Activated CD8-positive, alpha-beta T cell treated with anti-CD3 and anti-CD28 coated beads for 36 hours (primary cell): ENCODE measurements at regions of chr10 and their contacts with region 1.

Region 1: DNA sequence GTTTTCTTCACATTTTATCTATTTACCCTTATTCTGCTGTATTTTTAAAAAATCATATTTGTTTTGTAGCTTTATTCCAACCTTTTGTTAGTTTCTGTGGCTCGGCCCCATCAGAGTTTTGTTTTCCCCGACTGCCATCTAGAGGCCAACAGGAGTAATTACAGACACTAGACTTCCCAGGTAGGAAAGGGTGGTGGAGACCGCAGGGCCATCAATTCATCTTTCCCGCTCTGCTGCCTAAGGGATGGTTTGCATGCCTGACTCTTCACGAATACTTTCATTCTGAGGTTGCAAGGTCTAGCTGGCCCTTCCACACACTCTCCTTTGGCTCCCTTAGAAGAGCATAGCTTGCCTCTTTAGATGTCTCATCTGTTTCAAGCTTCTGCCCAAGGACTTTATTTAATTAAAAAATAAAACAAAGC is 38.3 kb downstream of the LYZL2 start:
- DNase-seq: peak; percentile 31
- ATAC-seq: peak; percentile 82
- H3K4me3 Mint-ChIP-seq: no peak overlapping the region
- H3K27ac Mint-ChIP-seq: no peak overlapping the region
- H3K4me1 Mint-ChIP-seq: no peaks in the 10 kb centered on the region
- H3K27me3 Mint-ChIP-seq: peaks cover 5% of the 10 kb centered on the region
- CTCF ChIP-seq: peak; percentile 74

Region 2: DNA sequence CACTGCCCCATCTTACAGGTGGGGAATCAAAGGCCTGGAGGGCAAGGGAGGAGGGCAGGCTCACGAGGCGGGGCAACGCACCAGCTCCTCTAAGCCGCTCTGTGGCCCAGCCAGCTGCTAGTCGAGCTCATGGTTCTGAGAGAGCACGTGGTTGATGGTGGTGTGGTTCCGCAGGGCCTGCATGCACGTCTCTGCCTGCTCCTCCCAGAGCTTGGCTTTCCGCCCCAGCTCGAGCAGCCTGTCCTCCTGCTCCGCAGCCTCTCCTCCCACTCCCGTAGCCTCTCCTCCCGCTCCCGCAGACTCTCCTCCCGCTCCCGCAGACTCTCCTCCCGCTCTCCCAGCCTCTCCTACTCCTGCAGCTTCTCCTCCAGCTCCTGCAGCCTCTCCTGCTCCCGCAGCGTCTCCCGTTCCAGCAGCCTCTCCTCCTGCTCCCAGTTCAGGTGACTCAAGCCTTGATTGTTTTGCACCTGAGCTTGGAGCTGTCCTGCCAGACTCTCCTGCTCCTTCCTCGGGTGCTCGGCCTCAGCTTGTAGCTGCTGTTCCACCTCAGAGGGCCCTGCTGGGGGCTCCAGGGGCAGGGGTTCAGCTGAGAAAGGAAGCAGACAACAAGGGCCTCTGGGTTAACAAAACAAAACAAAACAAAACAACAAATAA is 223.1 kb before region 1 on chr10:
- CTCF ChIA-PET with region 1: interaction called, 10 read pairs
- POLR2A ChIA-PET with region 1: no interaction called
- intact Hi-C with region 1: no loop called
- DNase-seq: no peak
- ATAC-seq: no peak
- H3K4me3 Mint-ChIP-seq: no peak overlapping the region
- H3K27ac Mint-ChIP-seq: no peak overlapping the region
- H3K4me1 Mint-ChIP-seq: peaks cover 7% of the 10 kb centered on the region
- H3K27me3 Mint-ChIP-seq: no peaks in the 10 kb centered on the region
- CTCF ChIP-seq: no peak

Region 3: GRCh38 chr10:30413996-30414576 is 177.2 kb before region 1 on chr10:
- CTCF ChIA-PET with region 1: interaction called, 23 read pairs
- POLR2A ChIA-PET with region 1: no interaction called
- intact Hi-C with region 1: no loop called
- DNase-seq: peak; percentile 40
- ATAC-seq: peak; percentile 71
- H3K4me3 Mint-ChIP-seq: no peak overlapping the region
- H3K27ac Mint-ChIP-seq: no peak overlapping the region
- H3K4me1 Mint-ChIP-seq: peaks cover 19% of the 10 kb centered on the region
- H3K27me3 Mint-ChIP-seq: no peaks in the 10 kb centered on the region
- CTCF ChIP-seq: peak; percentile 84

Region 4: GRCh38 chr10:30542001-30542894 is 49.0 kb before region 1 on chr10:
- CTCF ChIA-PET with region 1: interaction called, 31 read pairs
- POLR2A ChIA-PET with region 1: interaction called, 3 read pairs
- intact Hi-C with region 1: no loop called
- DNase-seq: no peak
- ATAC-seq: peak; percentile 45
- H3K4me3 Mint-ChIP-seq: no peak overlapping the region
- H3K27ac Mint-ChIP-seq: no peak overlapping the region
- H3K4me1 Mint-ChIP-seq: peaks cover 12% of the 10 kb centered on the region
- H3K27me3 Mint-ChIP-seq: peaks cover 2% of the 10 kb centered on the region
- CTCF ChIP-seq: no peak

Region 5: GRCh38 chr10:30606313-30606712 is 15.1 kb after region 1 on chr10:
- CTCF ChIA-PET with region 1: interaction called, 20 read pairs
- POLR2A ChIA-PET with region 1: no interaction called
- intact Hi-C with region 1: no loop called
- DNase-seq: no peak
- ATAC-seq: no peak
- H3K4me3 Mint-ChIP-seq: no peak overlapping the region
- H3K27ac Mint-ChIP-seq: no peak overlapping the region
- H3K4me1 Mint-ChIP-seq: no peaks in the 10 kb centered on the region
- H3K27me3 Mint-ChIP-seq: peaks cover 8% of the 10 kb centered on the region
- CTCF ChIP-seq: no peak

Region 6: GRCh38 chr10:30647089-30647488 is 55.8 kb after region 1 on chr10:
- CTCF ChIA-PET with region 1: no interaction called
- POLR2A ChIA-PET with region 1: no interaction called
- intact Hi-C with region 1: no loop called
- DNase-seq: peak; percentile 24
- ATAC-seq: peak; percentile 46
- H3K4me3 Mint-ChIP-seq: no peak overlapping the region
- H3K27ac Mint-ChIP-seq: no peak overlapping the region
- H3K4me1 Mint-ChIP-seq: peaks cover 15% of the 10 kb centered on the region
- H3K27me3 Mint-ChIP-seq: peaks cover 41% of the 10 kb centered on the region
- CTCF ChIP-seq: no peak

Region 7: GRCh38 chr10:30687698-30688219 is 96.5 kb after region 1 on chr10:
- CTCF ChIA-PET with region 1: no interaction called
- POLR2A ChIA-PET with region 1: no interaction called
- intact Hi-C with region 1: no loop called
- DNase-seq: peak; percentile 87
- ATAC-seq: peak; percentile 64
- H3K4me3 Mint-ChIP-seq: no peak overlapping the region
- H3K27ac Mint-ChIP-seq: peak overlapping the region; percentile 7
- H3K4me1 Mint-ChIP-seq: peaks cover 37% of the 10 kb centered on the region
- H3K27me3 Mint-ChIP-seq: peaks cover 10% of the 10 kb centered on the region
- CTCF ChIP-seq: peak; percentile 94

Region 8: DNA sequence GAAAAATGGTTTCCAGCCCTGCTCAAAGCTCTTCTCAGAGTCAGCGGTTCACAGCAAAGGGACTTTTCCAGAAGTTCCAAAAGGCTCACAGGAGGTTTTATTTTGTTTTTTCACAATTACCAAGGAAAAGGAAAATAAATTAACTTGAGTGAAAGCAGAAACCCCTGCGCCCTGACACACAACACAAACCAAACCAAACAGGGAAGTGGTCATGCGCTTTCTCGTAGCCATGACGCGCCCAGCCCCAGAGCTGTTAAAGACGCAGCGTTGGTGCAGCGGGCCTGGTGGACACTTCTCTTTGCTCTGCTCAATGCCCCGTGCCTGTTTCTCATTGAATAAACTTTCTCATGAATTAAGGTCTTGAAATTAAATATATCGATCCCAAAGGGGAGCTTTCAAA is 172.7 kb after region 1 on chr10:
- CTCF ChIA-PET with region 1: no interaction called
- POLR2A ChIA-PET with region 1: no interaction called
- intact Hi-C with region 1: no loop called
- DNase-seq: peak; percentile 32
- ATAC-seq: no peak
- H3K4me3 Mint-ChIP-seq: no peak overlapping the region
- H3K27ac Mint-ChIP-seq: no peak overlapping the region
- H3K4me1 Mint-ChIP-seq: peaks cover 11% of the 10 kb centered on the region
- H3K27me3 Mint-ChIP-seq: no peaks in the 10 kb centered on the region
- CTCF ChIP-seq: no peak